ENCODE measurements at regions of chr12 and their contacts with region 1.

Region 1: GRCh38 chr12:65836419-65837197 is 12.3 kb downstream of the HMGA2 start:
- DNase-seq: peak; percentile 64
- ATAC-seq: peak; percentile 61
- H3K4me3 ChIP-seq: no peak overlapping the region
- H3K27ac ChIP-seq: peak overlapping the region; percentile 60
- H3K4me1 ChIP-seq: peaks cover 96% of the 10 kb centered on the region
- H3K27me3 ChIP-seq: no peaks in the 10 kb centered on the region
- CTCF ChIP-seq: no peak
- EP300 ChIP-seq: no peak
- POLR2A ChIP-seq: peak; percentile 12 to 25; a peak in 1 of 4 replicates
- RAD21 ChIP-seq: no peak

Region 2: DNA sequence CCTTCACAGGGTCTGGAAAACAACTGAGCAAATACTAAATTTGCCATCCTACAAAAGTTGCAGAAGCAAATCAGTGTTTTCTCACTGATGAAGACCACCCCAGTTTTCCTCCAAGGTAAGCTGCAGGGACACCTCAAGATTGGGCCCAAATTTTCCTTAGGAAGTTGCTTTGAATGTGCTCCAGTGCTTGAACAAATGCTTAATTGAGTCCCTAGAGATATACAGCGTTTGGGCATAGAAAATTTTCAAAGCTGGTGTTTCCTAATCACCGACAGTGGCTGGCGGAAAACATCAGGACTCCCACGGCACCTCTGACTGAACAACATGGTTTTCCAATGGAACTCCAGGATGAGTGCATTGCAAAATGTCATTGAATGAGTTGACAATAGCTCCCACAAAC is 104.8 kb before region 1 on chr12:
- CTCF ChIA-PET with region 1: no interaction called
- POLR2A ChIA-PET with region 1: no interaction called
- in situ Hi-C with region 1: no loop called
- intact Hi-C with region 1: no loop called
- DNase-seq: no peak
- ATAC-seq: no peak
- H3K4me3 ChIP-seq: no peak overlapping the region
- H3K27ac ChIP-seq: no peak overlapping the region
- H3K4me1 ChIP-seq: peaks cover 7% of the 10 kb centered on the region; the same call in 1 of the 2 replicates
- H3K27me3 ChIP-seq: peaks cover 3 to 48% of the 10 kb centered on the region in 2 experiments; a peak in 3 of 5 replicates
- CTCF ChIP-seq: no peak
- EP300 ChIP-seq: no peak
- POLR2A ChIP-seq: no peak
- RAD21 ChIP-seq: no peak

Region 3: GRCh38 chr12:65788912-65789311 is 47.7 kb before region 1 on chr12:
- CTCF ChIA-PET with region 1: no interaction called
- POLR2A ChIA-PET with region 1: no interaction called
- in situ Hi-C with region 1: no loop called
- intact Hi-C with region 1: no loop called
- DNase-seq: peak; percentile 5
- ATAC-seq: peak; percentile 60
- H3K4me3 ChIP-seq: no peak overlapping the region
- H3K27ac ChIP-seq: no peak overlapping the region
- H3K4me1 ChIP-seq: peaks cover 8% of the 10 kb centered on the region
- H3K27me3 ChIP-seq: no peaks in the 10 kb centered on the region; a peak in 1 of 5 replicates
- CTCF ChIP-seq: peak; percentile 22; the same call in 1 of the 2 replicates
- EP300 ChIP-seq: no peak
- POLR2A ChIP-seq: no peak
- RAD21 ChIP-seq: no peak

Region 4: GRCh38 chr12:65878544-65878943 is 41.9 kb after region 1 on chr12:
- CTCF ChIA-PET with region 1: no interaction called
- POLR2A ChIA-PET with region 1: no interaction called
- in situ Hi-C with region 1: no loop called
- intact Hi-C with region 1: loop called (anchors 5 kb)
- DNase-seq: no peak
- ATAC-seq: no peak
- H3K4me3 ChIP-seq: no peak overlapping the region
- H3K27ac ChIP-seq: no peak overlapping the region
- H3K4me1 ChIP-seq: peaks cover 76% of the 10 kb centered on the region
- H3K27me3 ChIP-seq: no peaks in the 10 kb centered on the region
- CTCF ChIP-seq: peak; percentile 39
- EP300 ChIP-seq: no peak
- POLR2A ChIP-seq: no peak
- RAD21 ChIP-seq: no peak

Region 5: DNA sequence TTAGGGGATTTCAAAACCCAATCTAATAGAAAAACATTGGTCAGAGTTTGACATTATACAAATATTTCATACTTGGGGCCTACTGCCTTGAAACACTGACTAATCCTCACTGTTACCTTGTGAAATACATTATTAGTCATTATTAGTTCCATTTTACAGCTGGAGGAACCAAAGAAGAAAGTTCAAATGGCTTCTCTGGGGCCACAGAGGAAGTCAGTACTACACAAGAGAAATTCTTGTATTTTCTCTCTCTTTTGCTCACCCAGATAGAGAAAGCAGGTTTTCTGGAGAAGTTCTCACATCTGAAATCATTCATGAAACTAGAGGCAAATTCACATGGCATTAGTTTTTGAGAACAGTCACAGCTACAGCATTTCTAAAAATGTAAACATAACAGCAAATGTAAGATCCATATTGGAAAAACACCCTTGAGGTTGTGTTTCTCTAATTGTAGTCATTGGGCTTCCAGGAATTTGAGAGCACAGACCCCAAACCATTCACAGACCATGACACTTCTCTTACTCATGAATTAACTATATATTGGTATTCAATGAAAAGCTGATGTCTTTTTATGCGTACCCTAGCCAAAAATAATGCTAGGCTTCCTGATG is 210.9 kb after region 1 on chr12:
- CTCF ChIA-PET with region 1: no interaction called
- POLR2A ChIA-PET with region 1: no interaction called
- in situ Hi-C with region 1: no loop called
- intact Hi-C with region 1: loop called (anchors 5 kb)
- DNase-seq: no peak
- ATAC-seq: no peak
- H3K4me3 ChIP-seq: no peak overlapping the region
- H3K27ac ChIP-seq: peak overlapping the region; percentile 82
- H3K4me1 ChIP-seq: peaks cover 80% of the 10 kb centered on the region
- H3K27me3 ChIP-seq: no peaks in the 10 kb centered on the region
- CTCF ChIP-seq: no peak
- EP300 ChIP-seq: peak in 1 of 2 experiments; percentile 39; a peak in 1 of 4 replicates
- POLR2A ChIP-seq: no peak
- RAD21 ChIP-seq: no peak